ENCODE measurements at regions of chr5 and their contacts with region 1.

Region 1: DNA sequence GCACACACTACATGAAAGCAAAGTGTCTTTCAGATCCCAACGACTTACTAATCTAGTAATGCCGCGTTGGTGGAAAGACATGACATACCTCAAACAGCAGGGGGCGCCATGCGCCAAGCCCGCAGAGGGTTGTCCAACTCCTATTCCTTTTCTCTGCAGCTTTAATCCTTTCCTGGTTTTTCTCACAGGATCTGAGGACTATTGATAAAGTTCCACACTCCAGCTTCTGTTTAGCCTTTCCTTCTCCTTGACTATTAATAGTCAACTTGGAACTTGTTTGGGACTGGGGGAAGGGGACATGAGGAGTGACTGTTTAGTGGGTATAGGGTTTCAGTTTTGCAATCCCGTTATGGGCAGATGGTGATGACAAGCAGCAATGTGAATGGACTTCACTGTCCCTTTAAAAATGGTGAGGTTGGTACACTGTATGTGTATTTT is 62.9 kb downstream of the OTULIN start:
- DNase-seq: peak; percentile 54 to 91
- H3K4me3 ChIP-seq: no peak overlapping the region
- H3K27ac ChIP-seq: no peak overlapping the region
- H3K4me1 ChIP-seq: no peaks in the 10 kb centered on the region
- H3K27me3 ChIP-seq: peaks cover 22% of the 10 kb centered on the region; the same call in 1 of the 2 replicates
- CTCF ChIP-seq: peak; percentile 97

Region 2: GRCh38 chr5:14664302-14665100 is 62.9 kb before region 1 on chr5 and contains the start of gene OTULIN:
- CTCF ChIA-PET with region 1: no interaction called
- POLR2A ChIA-PET with region 1: no interaction called
- intact Hi-C with region 1: loop called (anchors 1 kb)
- DNase-seq: peak; percentile 71 to 98
- H3K4me3 ChIP-seq: peak within 1 kb of the TSS; percentile 73
- H3K27ac ChIP-seq: peak within 1 kb of the TSS; percentile 21
- H3K4me1 ChIP-seq: peaks cover 28% of the 10 kb centered on the region
- H3K27me3 ChIP-seq: no peaks in the 10 kb centered on the region
- CTCF ChIP-seq: no peak
- total RNA-seq, gene OTULIN: 77.2 and 79.1 TPM in 2 replicates

Region 3: GRCh38 chr5:14702238-14702839 is 25.1 kb before region 1 on chr5:
- CTCF ChIA-PET with region 1: interaction called, 19 read pairs
- POLR2A ChIA-PET with region 1: no interaction called
- intact Hi-C with region 1: no loop called
- DNase-seq: no peak
- H3K4me3 ChIP-seq: no peak overlapping the region
- H3K27ac ChIP-seq: no peak overlapping the region
- H3K4me1 ChIP-seq: no peaks in the 10 kb centered on the region
- H3K27me3 ChIP-seq: no peaks in the 10 kb centered on the region
- CTCF ChIP-seq: no peak

Region 4: GRCh38 chr5:14946815-14947640 is 219.6 kb after region 1 on chr5:
- CTCF ChIA-PET with region 1: no interaction called
- POLR2A ChIA-PET with region 1: no interaction called
- intact Hi-C with region 1: loop called (anchors 1 kb)
- DNase-seq: peak in 1 of 2 experiments; percentile 24
- H3K4me3 ChIP-seq: no peak overlapping the region
- H3K27ac ChIP-seq: no peak overlapping the region
- H3K4me1 ChIP-seq: no peaks in the 10 kb centered on the region
- H3K27me3 ChIP-seq: peaks cover 16% of the 10 kb centered on the region; the same call in 1 of the 2 replicates
- CTCF ChIP-seq: peak; percentile 49

Region 5: GRCh38 chr5:15013654-15014463 is 286.4 kb after region 1 on chr5:
- CTCF ChIA-PET with region 1: interaction called, 7 read pairs
- POLR2A ChIA-PET with region 1: interaction called, 9 read pairs
- intact Hi-C with region 1: loop called (anchors 1 kb)
- DNase-seq: peak in 1 of 2 experiments; percentile 30
- H3K4me3 ChIP-seq: no peak overlapping the region
- H3K27ac ChIP-seq: no peak overlapping the region
- H3K4me1 ChIP-seq: peaks cover 14% of the 10 kb centered on the region
- H3K27me3 ChIP-seq: no peaks in the 10 kb centered on the region
- CTCF ChIP-seq: peak; percentile 84